Activated CD4-positive, alpha-beta T cell treated with anti-CD3 and anti-CD28 coated beads for 36 hours (primary cell): ENCODE measurements at regions of chr10 and their contacts with region 1.

Region 1: DNA sequence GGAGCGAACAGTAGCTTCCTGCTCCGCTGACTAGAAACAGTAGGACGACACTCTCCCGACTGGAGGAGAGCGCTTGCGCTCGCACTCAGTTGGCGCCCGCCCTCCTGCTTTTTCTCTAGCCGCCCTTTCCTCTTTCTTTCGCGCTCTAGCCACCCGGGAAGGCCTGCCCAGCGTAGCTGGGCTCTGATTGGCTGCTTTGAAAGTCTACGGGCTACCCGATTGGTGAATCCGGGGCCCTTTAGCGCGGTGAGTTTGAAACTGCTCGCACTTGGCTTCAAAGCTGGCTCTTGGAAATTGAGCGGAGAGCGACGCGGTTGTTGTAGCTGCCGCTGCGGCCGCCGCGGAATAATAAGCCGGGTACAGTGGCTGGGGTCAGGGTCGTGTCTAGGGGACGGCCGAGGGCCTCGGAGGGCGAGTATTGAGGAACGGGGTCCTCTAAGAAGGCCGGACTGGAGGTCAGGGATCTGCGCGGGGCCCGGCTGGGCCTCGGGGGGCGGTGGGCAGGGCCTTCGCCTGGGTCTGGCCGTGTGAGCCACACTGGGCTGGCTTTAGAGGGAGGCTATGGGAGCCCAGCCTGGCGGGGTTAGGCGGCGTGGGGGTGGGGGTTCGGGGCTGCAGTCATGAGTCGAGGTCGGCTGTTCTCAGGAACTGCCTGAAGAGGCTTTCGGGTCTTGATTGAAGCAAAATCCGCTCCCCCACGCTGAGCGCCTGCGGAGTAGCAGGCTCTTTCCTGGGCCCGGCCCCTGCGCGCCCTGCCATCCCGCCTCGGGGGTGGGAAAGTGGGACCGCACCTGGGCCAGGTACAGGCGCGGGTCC is at the start of gene CDK1:
- DNase-seq: peak; percentile 98
- ATAC-seq: peak; percentile 99
- H3K4me3 Mint-ChIP-seq: peak within 1 kb of the TSS; percentile 98
- H3K27ac Mint-ChIP-seq: peak within 1 kb of the TSS; percentile 96
- H3K4me1 Mint-ChIP-seq: peaks cover 17% of the 10 kb centered on the region
- H3K27me3 Mint-ChIP-seq: no peaks in the 10 kb centered on the region
- total RNA-seq, gene CDK1: 88.5 to 138 TPM

Region 2: DNA sequence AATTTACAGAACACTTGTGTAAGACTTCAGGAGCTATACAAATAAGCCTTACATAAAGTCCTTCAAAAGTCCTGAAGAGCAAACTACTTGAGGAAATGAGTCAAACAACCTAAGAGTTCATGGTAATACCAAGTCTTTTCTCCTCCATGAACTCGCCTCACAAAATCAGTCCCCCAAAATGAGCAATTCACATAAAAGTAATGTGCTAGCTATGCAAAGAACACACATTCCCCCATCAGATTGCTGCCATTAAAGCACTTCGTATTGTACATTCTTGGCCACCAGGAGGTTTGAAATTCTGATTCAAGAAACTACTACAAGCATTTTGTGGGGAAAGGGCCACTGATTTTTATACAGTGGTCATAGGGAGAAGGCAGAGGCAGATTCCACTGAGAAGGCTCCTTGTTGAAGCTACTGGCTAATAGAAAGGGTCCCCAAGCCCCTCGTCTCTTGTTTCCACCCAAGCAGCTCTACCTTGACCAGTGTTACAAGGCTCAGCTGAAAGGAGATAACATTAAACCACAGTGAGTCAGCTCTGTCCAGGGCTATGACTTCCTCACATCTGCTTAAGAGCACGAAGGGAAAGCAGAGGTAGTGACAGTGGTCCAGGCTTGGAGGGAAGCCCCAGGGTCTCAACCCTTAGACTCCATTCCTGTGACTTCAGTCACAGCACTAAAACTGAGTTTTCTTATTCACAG is 115.4 kb before region 1 on chr10:
- CTCF ChIA-PET with region 1: no interaction called
- POLR2A ChIA-PET with region 1: no interaction called
- intact Hi-C with region 1: loop called (anchors 5 kb)
- DNase-seq: no peak
- ATAC-seq: peak; percentile 49
- H3K4me3 Mint-ChIP-seq: no peak overlapping the region
- H3K27ac Mint-ChIP-seq: peak overlapping the region; percentile 12
- H3K4me1 Mint-ChIP-seq: peaks cover 48% of the 10 kb centered on the region
- H3K27me3 Mint-ChIP-seq: no peaks in the 10 kb centered on the region

Region 3: DNA sequence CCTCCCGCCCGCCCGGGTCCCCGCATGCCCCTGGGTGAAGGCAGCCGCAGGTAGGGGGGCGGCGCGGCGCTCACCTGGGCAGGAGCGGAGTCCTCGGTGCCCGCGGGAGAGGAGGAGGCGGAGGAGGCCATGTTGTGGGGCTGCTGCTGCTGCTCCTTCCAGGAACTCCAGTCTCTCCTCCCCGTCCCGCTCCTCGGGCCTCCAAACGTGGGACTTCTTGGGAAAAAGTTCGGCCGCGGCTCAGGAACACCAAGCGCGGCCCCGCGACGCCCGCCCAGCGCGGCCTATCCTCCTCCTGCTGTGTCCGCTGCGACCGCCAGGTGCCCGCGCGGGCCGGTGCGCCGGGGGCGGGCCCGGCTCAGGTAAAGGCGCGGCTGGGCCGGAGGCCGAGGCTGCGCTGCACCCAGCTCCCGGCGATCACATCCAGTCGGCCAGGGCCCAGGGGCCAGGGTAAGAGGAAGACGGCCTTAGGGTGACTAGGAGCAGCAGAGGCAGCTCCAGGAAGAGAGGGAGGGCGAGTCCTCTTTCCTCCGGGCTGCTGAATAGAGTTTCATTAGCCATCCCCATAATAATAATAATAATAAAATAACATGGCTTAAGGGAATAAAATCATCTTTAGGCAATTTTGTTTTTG is 45.1 kb before region 1 on chr10:
- CTCF ChIA-PET with region 1: no interaction called
- POLR2A ChIA-PET with region 1: interaction called, 3 read pairs
- intact Hi-C with region 1: loop called (anchors 1 to 2 kb)
- DNase-seq: peak; percentile 69
- ATAC-seq: peak; percentile 59
- H3K4me3 Mint-ChIP-seq: peak overlapping the region; percentile 90
- H3K27ac Mint-ChIP-seq: no peak overlapping the region
- H3K4me1 Mint-ChIP-seq: peaks cover 32% of the 10 kb centered on the region
- H3K27me3 Mint-ChIP-seq: no peaks in the 10 kb centered on the region

Region 4: GRCh38 chr10:60955957-60956425 is 177.6 kb after region 1 on chr10:
- CTCF ChIA-PET with region 1: interaction called, 3 read pairs
- POLR2A ChIA-PET with region 1: interaction called, 12 read pairs
- intact Hi-C with region 1: no loop called
- DNase-seq: no peak
- ATAC-seq: no peak
- H3K4me3 Mint-ChIP-seq: no peak overlapping the region
- H3K27ac Mint-ChIP-seq: no peak overlapping the region
- H3K4me1 Mint-ChIP-seq: no peaks in the 10 kb centered on the region
- H3K27me3 Mint-ChIP-seq: peaks cover 11% of the 10 kb centered on the region

Region 5: DNA sequence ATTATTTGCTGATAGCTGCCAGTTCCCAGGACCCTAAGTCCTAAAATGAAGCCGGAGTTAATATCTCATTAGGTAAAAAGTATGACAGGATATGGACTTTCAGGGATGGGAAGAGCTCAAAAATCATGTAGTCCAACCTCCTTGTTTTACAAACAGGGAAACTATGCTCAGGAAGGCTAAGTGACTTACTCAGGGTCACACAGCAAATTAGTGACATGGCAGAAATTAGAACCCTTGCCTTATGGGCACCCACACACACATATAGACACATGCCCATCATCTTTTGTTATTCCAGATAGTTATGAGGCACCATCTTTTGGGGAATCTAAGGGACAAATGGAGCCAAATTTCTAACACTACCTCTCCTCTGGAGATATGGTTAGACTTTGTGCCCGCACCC is 1031.8 kb after region 1 on chr10:
- CTCF ChIA-PET with region 1: no interaction called
- POLR2A ChIA-PET with region 1: interaction called, 11 read pairs
- intact Hi-C with region 1: no loop called
- DNase-seq: no peak
- ATAC-seq: no peak
- H3K4me3 Mint-ChIP-seq: no peak overlapping the region
- H3K27ac Mint-ChIP-seq: no peak overlapping the region
- H3K4me1 Mint-ChIP-seq: peaks cover 3% of the 10 kb centered on the region
- H3K27me3 Mint-ChIP-seq: peaks cover 2% of the 10 kb centered on the region